HEK293T (cell line): ENCODE measurements at regions of chr12 and their contacts with region 1.

Region 1: GRCh38 chr12:112992541-112993398 is 14.5 kb downstream of the OAS2 start:
- DNase-seq: peak; percentile 69

Region 2: GRCh38 chr12:112961074-112961473 is 31.7 kb before region 1 on chr12:
- CTCF ChIA-PET with region 1: no interaction called
- POLR2A ChIA-PET with region 1: no interaction called
- DNase-seq: no peak

Region 3: GRCh38 chr12:113005754-113006153 is 13.0 kb after region 1 on chr12:
- CTCF ChIA-PET with region 1: interaction called, 11 read pairs
- POLR2A ChIA-PET with region 1: no interaction called
- DNase-seq: no peak

Region 4: DNA sequence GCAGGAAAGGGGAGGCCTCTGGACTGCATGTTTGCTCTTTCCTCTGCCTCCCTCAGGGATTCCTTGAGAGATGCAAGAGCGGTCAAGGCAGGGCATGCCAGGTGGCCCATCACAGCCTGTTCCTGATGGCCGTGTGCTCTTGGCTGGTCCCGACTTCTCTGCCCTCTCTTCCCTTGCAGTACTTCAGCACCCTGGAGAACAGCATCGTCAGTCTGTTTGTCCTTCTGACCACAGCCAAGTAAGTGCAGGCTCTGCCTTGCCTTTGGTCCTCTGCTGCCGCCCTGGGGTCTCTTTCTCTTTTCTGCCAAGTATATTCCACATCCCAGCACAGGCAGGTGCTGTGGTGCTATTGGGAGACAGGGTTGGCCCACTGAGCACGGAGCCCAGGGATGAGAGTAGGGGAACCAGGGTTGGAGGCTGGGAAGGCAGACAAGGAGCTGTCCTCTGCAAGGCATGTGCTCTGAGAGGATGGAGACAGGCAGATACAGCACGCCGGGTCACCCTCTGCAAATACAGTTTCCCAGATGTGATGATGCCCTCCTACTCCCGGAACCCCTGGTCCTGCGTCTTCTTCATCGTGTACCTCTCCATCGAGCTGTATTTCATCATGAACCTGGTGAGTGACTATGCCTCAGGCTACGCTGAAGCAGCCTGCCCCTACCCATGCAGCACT is 280.4 kb after region 1 on chr12:
- CTCF ChIA-PET with region 1: no interaction called
- POLR2A ChIA-PET with region 1: no interaction called
- DNase-seq: no peak